ENCODE measurements at regions of chr10 and their contacts with region 1.

Region 1: DNA sequence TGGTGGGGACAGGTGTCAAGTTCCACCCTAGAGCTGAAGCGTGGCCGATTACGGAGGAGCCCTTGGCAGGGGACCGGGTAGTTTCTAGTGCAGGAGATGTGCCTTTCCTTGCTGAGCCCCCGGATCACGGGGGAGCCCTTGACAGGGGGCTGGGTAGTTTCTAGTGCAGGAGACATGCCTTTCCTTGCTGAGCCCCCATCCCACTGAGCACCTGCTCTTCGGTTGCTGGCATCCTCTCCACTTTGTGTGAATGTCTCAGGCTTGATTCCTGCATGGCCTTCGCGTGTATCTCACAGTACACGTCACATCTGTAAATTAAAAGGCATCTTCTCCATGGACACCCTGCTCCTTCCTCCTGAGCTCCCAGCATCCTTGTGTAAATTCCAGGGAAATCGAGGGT is 263.5 kb downstream of the ADARB2 start:
- DNase-seq: no peak
- H3K4me3 ChIP-seq: no peak overlapping the region
- H3K27ac ChIP-seq: no peak overlapping the region
- H3K4me1 ChIP-seq: no peaks in the 10 kb centered on the region
- H3K27me3 ChIP-seq: peaks cover 0 to 23% of the 10 kb centered on the region in 2 donors
- CTCF ChIP-seq: no peak
- POLR2A ChIP-seq: no peak

Region 2: GRCh38 chr10:1255118-1255517 is 218.8 kb before region 1 on chr10:
- intact Hi-C with region 1: no loop called
- DNase-seq: no peak
- H3K4me3 ChIP-seq: no peak overlapping the region
- H3K27ac ChIP-seq: no peak overlapping the region
- H3K4me1 ChIP-seq: no peaks in the 10 kb centered on the region
- H3K27me3 ChIP-seq: peaks cover 0 to 11% of the 10 kb centered on the region in 2 donors
- CTCF ChIP-seq: no peak
- POLR2A ChIP-seq: no peak

Region 3: GRCh38 chr10:1395088-1396006 is 78.5 kb before region 1 on chr10:
- intact Hi-C with region 1: no loop called
- DNase-seq: no peak
- H3K4me3 ChIP-seq: no peak overlapping the region
- H3K27ac ChIP-seq: no peak overlapping the region
- H3K4me1 ChIP-seq: no peaks in the 10 kb centered on the region
- H3K27me3 ChIP-seq: peaks cover 0 to 4% of the 10 kb centered on the region in 2 donors
- CTCF ChIP-seq: no peak
- POLR2A ChIP-seq: no peak

Region 4: DNA sequence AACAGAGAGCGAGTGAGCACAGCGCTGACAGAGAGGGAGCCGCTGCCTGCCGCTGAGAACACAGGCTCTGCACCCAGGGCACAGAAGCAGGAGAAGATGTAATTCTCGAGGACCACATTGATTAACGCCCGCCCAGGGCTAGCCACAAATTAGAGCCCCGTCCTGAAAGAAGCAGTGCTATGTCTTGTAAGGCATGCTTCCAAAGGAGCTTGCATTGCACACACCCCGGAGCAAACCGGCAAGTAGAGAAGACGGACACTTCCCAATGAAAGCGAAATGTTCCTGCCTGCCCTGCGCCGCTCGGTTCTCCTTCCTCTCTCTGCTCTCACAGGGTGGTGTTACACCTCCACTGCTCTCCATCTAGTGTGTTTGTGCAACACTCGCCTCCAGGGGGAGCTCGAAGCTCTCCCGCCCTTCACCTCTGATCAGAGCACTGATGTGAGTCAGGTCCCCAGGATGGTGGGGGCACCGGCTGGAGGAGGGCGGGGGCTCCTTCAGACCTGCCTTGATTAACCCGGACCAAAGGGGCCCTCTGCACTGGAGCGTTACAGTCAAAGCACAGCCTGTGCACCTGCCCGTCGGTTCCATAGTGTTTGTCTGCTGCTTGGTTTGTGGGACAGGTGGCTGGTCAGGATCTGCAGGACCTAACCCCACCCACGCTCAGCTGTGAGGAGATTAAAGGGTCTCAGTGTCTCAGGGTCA is 53.1 kb before region 1 on chr10:
- intact Hi-C with region 1: no loop called
- DNase-seq: peak; percentile 34 to 61
- H3K4me3 ChIP-seq: peak overlapping the region in 1 of 3 donors; percentile 34
- H3K27ac ChIP-seq: no peak overlapping the region
- H3K4me1 ChIP-seq: no peaks in the 10 kb centered on the region
- H3K27me3 ChIP-seq: peaks cover 0 to 24% of the 10 kb centered on the region in 2 donors
- CTCF ChIP-seq: peak in 2 of 3 donors; percentile 45 to 61
- POLR2A ChIP-seq: no peak

Region 5: GRCh38 chr10:1485357-1485756 is 11.5 kb after region 1 on chr10:
- intact Hi-C with region 1: loop called (anchors 1 kb)
- DNase-seq: no peak
- H3K4me3 ChIP-seq: no peak overlapping the region
- H3K27ac ChIP-seq: no peak overlapping the region
- H3K4me1 ChIP-seq: no peaks in the 10 kb centered on the region
- H3K27me3 ChIP-seq: peaks cover 0 to 24% of the 10 kb centered on the region in 2 donors
- CTCF ChIP-seq: no peak
- POLR2A ChIP-seq: no peak